ENCODE measurements at regions of chr1 and their contacts with region 1.

Region 1: GRCh38 chr1:118767971-118768370 is 220.2 kb downstream of the TBX15 start:
- DNase-seq: no peak
- H3K4me3 ChIP-seq: no peak overlapping the region
- H3K27ac ChIP-seq: no peak overlapping the region
- H3K4me1 ChIP-seq: no peaks in the 10 kb centered on the region
- H3K27me3 ChIP-seq: no peaks in the 10 kb centered on the region
- CTCF ChIP-seq: no peak

Region 2: GRCh38 chr1:119046785-119047438 is 278.9 kb after region 1 on chr1:
- CTCF ChIA-PET with region 1: no interaction called
- POLR2A ChIA-PET with region 1: interaction called, 10 read pairs
- intact Hi-C with region 1: no loop called
- DNase-seq: peak in 1 of 2 experiments; percentile 12
- H3K4me3 ChIP-seq: no peak overlapping the region
- H3K27ac ChIP-seq: no peak overlapping the region
- H3K4me1 ChIP-seq: no peaks in the 10 kb centered on the region
- H3K27me3 ChIP-seq: no peaks in the 10 kb centered on the region
- CTCF ChIP-seq: no peak

Measured in PC-9 (cell line).